ENCODE measurements at regions of chr4 and their contacts with region 1.

Region 1: GRCh38 chr4:43282534-43282933 is 390.0 kb downstream of the GRXCR1 start:
- DNase-seq: no peak
- ATAC-seq: no peak
- H3K4me3 ChIP-seq: no peak overlapping the region
- H3K27ac ChIP-seq: no peak overlapping the region
- H3K4me1 ChIP-seq: 0 out of 2 replicates have a peak, but pooled peaks cover under 1% of the 10 kb centered on the region
- H3K27me3 ChIP-seq: no peaks in the 10 kb centered on the region
- CTCF ChIP-seq: no peak

Region 2: DNA sequence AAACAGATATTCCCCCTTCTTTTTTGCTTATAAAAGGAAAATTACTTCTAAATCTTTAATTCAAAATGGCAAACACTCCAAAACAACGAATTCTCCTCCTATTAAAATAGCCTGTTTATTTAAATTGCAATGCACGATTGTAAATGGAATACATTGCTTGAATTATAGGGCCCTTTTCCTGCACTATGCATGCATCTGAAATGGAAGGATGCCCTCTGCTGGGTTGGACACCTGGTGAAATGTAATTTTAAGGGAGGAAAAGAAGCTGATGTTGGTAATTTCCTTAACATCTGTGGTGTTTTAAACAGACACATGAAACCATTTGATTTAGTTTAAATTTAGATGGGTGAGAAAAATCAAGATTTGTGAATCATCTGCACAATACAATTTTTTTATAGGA is 317.2 kb before region 1 on chr4:
- CTCF ChIA-PET with region 1: no interaction called
- POLR2A ChIA-PET with region 1: no interaction called
- intact Hi-C with region 1: no loop called
- DNase-seq: peak; percentile 48
- ATAC-seq: peak; percentile 60
- H3K4me3 ChIP-seq: no peak overlapping the region
- H3K27ac ChIP-seq: no peak overlapping the region
- H3K4me1 ChIP-seq: no peaks in the 10 kb centered on the region
- H3K27me3 ChIP-seq: no peaks in the 10 kb centered on the region
- CTCF ChIP-seq: peak; percentile 65

Region 3: DNA sequence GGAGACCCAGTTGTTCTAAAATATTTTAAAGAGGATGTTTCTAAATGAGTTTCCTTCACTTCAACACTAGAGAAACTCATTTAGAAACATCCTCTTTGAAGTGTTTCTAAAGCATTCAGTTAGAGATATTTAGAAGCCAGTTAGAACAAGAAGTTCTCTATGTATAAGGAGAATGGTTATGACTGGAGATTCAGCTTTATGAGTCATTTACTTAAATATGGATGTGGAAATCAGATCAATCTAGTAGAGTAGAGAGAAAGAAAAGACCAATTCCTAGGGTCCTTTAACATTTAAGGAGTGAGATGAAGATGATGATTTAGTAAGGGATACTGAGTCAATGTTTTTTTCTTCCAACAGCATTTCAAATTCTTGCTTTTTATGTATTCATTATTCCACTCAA is 155.9 kb before region 1 on chr4:
- CTCF ChIA-PET with region 1: no interaction called
- POLR2A ChIA-PET with region 1: no interaction called
- intact Hi-C with region 1: no loop called
- DNase-seq: no peak
- ATAC-seq: no peak
- H3K4me3 ChIP-seq: no peak overlapping the region
- H3K27ac ChIP-seq: no peak overlapping the region
- H3K4me1 ChIP-seq: no peaks in the 10 kb centered on the region
- H3K27me3 ChIP-seq: no peaks in the 10 kb centered on the region
- CTCF ChIP-seq: no peak

Region 4: DNA sequence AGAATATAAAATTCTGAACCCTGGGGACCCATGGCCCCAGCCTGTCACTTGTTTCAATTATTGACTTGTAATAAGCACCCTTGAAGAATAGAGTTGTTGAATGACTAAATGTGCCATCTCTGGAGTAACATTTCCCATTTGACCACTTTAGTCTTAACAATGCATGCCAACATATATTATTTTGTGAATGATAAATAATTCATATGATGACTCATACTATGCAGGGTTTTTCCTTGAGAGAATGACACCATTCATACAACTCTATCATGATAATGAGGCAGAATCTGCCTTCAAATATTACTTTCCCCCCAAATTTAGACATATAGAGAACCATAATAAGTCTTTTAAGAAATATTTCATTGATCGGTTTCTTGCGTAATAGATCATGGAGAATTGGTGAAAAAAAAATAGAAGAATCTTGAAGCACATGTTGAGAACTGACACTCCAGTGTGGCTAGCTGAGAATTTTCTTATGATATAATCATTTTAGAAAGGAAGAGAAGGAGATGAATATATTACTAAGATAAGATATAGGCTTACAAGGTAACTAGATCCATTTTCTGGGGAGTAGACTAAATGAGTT is 14.5 kb after region 1 on chr4:
- CTCF ChIA-PET with region 1: no interaction called
- POLR2A ChIA-PET with region 1: interaction called, 14 read pairs
- intact Hi-C with region 1: no loop called
- DNase-seq: peak; percentile 50
- ATAC-seq: peak; percentile 70
- H3K4me3 ChIP-seq: no peak overlapping the region
- H3K27ac ChIP-seq: no peak overlapping the region
- H3K4me1 ChIP-seq: 0 out of 2 replicates have a peak, but pooled peaks cover 2% of the 10 kb centered on the region
- H3K27me3 ChIP-seq: no peaks in the 10 kb centered on the region
- CTCF ChIP-seq: no peak

Measured in PC-3 (cell line).